ENCODE measurements at regions of chr18 and their contacts with region 1.

Region 1: DNA sequence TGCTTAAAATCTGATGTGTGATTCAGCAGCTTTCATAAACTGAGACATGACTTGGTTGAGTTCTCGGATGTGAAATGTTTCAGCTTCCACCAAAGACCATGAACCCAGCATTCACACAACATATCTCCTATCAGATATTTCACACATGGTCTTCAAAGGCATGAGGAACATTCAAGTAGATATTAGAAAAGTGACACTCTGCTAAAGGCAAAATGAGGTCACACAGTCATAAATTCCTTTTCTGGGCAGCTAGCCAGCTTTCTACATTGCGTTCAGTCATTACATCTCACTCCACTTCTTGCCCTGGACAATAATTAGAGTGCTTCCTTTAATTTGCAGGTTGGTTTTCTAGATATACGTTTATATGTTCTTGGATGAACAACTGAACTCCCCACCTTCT is 96.7 kb downstream of the GAREM1 start:
- DNase-seq: peak; percentile 73
- H3K4me3 Mint-ChIP-seq: no peak overlapping the region
- H3K27ac Mint-ChIP-seq: peak overlapping the region; percentile 98
- H3K4me1 Mint-ChIP-seq: peaks cover 45% of the 10 kb centered on the region
- H3K27me3 Mint-ChIP-seq: no peaks in the 10 kb centered on the region
- CTCF ChIP-seq: no peak

Region 2: DNA sequence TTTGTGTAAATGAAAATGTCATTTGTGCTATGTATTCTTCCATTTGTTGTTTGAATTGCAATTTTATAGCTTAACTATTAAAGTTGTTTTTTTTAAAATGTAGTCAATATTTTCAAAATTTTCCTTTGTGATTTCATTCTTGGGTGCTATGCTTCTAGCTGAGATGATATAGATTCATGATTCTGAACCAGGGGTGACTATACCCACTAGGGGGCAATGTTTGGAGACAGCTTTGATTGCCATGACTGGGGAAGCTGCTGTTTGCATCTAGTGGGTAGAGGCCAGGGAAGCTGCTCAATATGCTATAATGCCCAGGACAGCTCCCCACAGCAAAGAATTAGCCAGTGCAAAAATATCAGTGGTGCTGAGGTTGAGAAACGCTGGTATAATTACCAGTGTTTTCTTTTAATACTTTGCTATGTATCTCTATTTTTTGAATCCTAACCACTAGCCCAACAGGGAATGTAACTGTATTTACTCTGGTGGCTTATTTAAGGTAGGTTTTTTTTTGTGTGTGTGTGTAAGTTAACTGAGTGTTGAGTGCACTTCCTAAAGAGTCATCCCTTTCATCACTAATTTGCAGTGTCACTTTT is 84.4 kb before region 1 on chr18:
- CTCF ChIA-PET with region 1: interaction called, 6 read pairs
- POLR2A ChIA-PET with region 1: interaction called, 15 read pairs
- intact Hi-C with region 1: no loop called
- DNase-seq: peak; percentile 82
- H3K4me3 Mint-ChIP-seq: no peak overlapping the region
- H3K27ac Mint-ChIP-seq: no peak overlapping the region
- H3K4me1 Mint-ChIP-seq: peaks cover 26% of the 10 kb centered on the region
- H3K27me3 Mint-ChIP-seq: no peaks in the 10 kb centered on the region
- CTCF ChIP-seq: peak; percentile 59

Region 3: DNA sequence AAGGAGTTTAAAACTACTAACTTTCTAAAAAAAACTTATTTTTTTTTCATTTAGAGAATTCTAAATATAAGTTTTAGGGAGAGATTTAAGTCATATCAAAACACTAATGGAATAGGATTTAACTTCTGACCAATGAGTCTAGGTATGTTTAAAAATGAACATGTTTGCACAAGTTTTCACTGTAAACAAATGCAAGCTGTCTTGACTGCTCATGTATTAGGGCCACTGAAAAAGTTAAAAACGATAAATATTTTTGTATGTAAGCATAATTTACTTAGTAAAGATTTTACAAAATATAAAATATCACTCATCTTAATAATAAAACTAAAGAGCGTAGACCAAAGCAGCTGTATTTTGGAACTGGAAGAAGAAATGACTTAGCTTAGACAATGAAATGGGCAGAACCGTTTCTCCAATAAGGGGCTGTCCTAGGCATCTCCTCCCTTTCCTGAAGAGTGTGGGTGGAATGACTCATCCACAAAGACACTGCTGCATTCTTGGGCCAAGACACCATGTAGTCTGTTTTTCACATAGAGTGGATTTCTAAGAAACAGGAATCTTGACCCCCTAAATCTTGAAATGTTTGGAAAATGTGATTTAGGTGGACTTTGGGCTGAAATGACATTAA is 65.4 kb before region 1 on chr18:
- CTCF ChIA-PET with region 1: interaction called, 3 read pairs
- POLR2A ChIA-PET with region 1: interaction called, 11 read pairs
- intact Hi-C with region 1: no loop called
- DNase-seq: peak; percentile 93
- H3K4me3 Mint-ChIP-seq: no peak overlapping the region
- H3K27ac Mint-ChIP-seq: peak overlapping the region; percentile 49
- H3K4me1 Mint-ChIP-seq: peaks cover 19% of the 10 kb centered on the region
- H3K27me3 Mint-ChIP-seq: no peaks in the 10 kb centered on the region
- CTCF ChIP-seq: no peak

Region 4: GRCh38 chr18:32317651-32318050 is 56.3 kb before region 1 on chr18:
- CTCF ChIA-PET with region 1: no interaction called
- POLR2A ChIA-PET with region 1: interaction called, 18 read pairs
- intact Hi-C with region 1: no loop called
- DNase-seq: peak; percentile 16
- H3K4me3 Mint-ChIP-seq: peak overlapping the region; percentile 8
- H3K27ac Mint-ChIP-seq: peak overlapping the region; percentile 68
- H3K4me1 Mint-ChIP-seq: peaks cover 13% of the 10 kb centered on the region
- H3K27me3 Mint-ChIP-seq: no peaks in the 10 kb centered on the region
- CTCF ChIP-seq: no peak

Region 5: GRCh38 chr18:32349728-32350395 is 24.1 kb before region 1 on chr18:
- CTCF ChIA-PET with region 1: no interaction called
- POLR2A ChIA-PET with region 1: interaction called, 29 read pairs
- intact Hi-C with region 1: no loop called
- DNase-seq: peak; percentile 94
- H3K4me3 Mint-ChIP-seq: peak overlapping the region; percentile 67
- H3K27ac Mint-ChIP-seq: peak overlapping the region; percentile 94
- H3K4me1 Mint-ChIP-seq: peaks cover 28% of the 10 kb centered on the region
- H3K27me3 Mint-ChIP-seq: no peaks in the 10 kb centered on the region
- CTCF ChIP-seq: no peak

Measured in MCF 10A (cell line).